ENCODE measurements at regions of chr15 and their contacts with region 1.

Region 1: DNA sequence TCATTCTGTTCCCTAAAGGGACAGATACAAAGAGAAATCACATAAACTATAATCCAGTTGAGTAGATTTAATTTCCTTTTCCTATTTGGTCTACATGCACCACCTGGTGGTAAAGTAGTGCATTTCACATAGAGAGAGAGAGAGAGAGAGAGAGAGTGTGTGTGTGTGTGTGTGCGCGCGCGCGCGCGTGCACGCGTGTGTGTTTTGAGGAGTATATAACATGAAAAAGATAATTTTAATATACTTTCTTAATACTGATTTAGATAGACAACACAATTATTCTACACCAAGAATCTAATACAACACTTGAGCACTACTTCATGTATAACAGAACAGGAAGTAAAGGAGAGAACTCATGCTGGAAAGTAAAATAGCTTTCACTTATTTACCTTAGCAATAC is 1.1 kb upstream of the FGF7 start:
- DNase-seq: peak; percentile 64
- ATAC-seq: peak; percentile 85 to 89
- H3K4me3 ChIP-seq: peak overlapping the region; percentile 47
- H3K27ac ChIP-seq: peak overlapping the region; percentile 12
- H3K4me1 ChIP-seq: no peaks in the 10 kb centered on the region
- H3K27me3 ChIP-seq: no peaks in the 10 kb centered on the region
- CTCF ChIP-seq: peak; percentile 82

Region 2: DNA sequence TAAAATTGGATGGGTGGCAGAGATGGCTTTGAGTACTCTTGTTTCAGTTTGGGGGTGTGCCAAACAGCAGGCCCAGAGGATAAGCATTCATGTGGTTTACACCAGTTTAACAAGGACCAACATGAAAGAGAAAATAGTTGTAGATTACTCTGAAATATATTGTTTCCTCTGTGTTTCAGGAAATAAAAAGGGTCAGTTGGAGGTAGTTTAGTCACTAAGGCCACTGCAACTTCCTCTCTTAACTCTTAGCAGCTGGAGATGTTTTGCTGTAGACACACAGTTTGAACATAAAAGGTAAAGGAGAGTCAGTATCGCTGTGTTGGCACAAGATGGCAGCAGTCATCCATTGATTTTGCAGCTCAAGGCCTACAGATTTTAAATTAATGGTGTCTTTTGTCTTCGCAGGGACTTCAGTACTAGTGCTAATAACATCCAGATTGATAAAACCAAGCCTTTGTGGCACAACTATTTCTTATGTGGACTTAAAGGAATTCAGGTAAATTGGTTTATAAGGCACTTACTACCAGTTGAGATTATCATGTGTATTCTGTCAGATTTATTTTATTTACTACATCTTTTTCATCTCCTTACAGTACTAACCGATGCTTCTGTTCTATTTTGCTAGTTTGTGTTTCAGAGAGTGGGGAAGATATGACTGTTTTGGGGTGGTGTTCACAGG is 186.4 kb before region 1 on chr15:
- intact Hi-C with region 1: loop called (anchors 5 kb)
- DNase-seq: no peak
- ATAC-seq: peak; percentile 64 to 85
- H3K4me3 ChIP-seq: no peak overlapping the region
- H3K27ac ChIP-seq: no peak overlapping the region
- H3K4me1 ChIP-seq: peaks cover 7% of the 10 kb centered on the region
- H3K27me3 ChIP-seq: no peaks in the 10 kb centered on the region
- CTCF ChIP-seq: peak; percentile 69